Activated CD8-positive, alpha-beta T cell treated with anti-CD3 and anti-CD28 coated beads, Interleukin-2, amount 10 ng/mL, durations not matched to agents 7 days and 5 days (primary cell): ENCODE measurements at regions of chr4 and their contacts with region 1.

Region 1: GRCh38 chr4:120843849-120844527 is 78.5 kb downstream of the PRDM5 start:
- DNase-seq: no peak
- ATAC-seq: no peak
- H3K4me3 Mint-ChIP-seq: no peak overlapping the region
- H3K27ac Mint-ChIP-seq: no peak overlapping the region
- H3K4me1 Mint-ChIP-seq: peaks cover 7% of the 10 kb centered on the region
- H3K27me3 Mint-ChIP-seq: no peaks in the 10 kb centered on the region

Region 2: DNA sequence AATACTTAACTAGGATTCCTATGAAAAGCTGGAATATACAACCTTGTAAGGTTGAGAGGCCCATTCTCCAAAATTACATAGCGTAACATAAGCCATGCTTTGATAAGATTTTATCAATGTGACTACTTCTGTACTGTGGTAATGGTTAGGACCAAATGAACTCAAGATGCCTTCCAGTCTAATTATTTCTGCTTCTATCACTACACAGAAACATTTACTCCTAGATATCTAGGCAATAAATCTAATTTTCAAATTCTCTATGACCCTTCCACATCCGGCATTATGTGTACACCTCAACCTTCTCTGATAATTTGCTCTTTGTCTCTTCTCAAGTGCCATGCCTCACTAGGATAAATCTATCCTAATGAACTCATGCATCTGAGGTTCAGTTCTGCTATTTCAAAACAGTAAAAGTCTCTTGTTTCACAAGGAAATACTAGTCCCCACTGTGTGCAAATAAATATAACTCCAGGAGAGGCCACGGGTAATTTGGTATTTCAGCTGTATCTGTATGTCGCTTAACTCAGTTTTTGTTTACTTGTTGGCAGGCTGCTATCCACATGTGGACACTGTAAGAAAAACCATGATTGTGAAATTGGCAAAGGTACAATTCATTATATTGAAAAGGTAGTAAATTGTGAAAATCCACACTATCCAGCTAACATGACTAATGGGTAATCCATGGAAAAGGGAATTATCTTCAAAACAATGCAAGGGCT is 14.7 kb before region 1 on chr4:
- CTCF ChIA-PET with region 1: interaction called, 17 read pairs
- POLR2A ChIA-PET with region 1: no interaction called
- DNase-seq: no peak
- ATAC-seq: no peak
- H3K4me3 Mint-ChIP-seq: no peak overlapping the region
- H3K27ac Mint-ChIP-seq: no peak overlapping the region
- H3K4me1 Mint-ChIP-seq: no peaks in the 10 kb centered on the region
- H3K27me3 Mint-ChIP-seq: no peaks in the 10 kb centered on the region

Region 3: DNA sequence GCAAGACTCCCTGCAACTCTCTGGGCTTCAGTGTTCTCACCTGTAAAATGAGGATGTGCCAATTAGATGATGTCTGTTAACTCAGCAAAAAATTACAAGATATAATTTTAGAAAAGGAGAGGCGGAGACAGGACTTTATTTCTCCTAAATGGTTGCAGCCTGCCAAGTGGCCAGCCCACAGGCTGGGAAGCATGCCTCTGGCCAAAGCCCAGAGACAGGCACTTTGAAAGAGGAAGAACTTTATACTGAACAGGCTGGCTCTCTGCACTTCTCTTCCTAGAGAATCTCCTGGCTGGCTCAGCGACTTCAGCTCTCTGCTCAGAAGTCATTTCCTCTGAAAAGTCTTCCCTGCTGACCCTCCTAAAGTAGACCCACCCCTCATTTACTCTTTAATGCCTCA is 74.8 kb after region 1 on chr4:
- CTCF ChIA-PET with region 1: interaction called, 11 read pairs
- POLR2A ChIA-PET with region 1: no interaction called
- DNase-seq: no peak
- ATAC-seq: no peak
- H3K4me3 Mint-ChIP-seq: no peak overlapping the region
- H3K27ac Mint-ChIP-seq: no peak overlapping the region
- H3K4me1 Mint-ChIP-seq: peaks cover 14% of the 10 kb centered on the region
- H3K27me3 Mint-ChIP-seq: peaks cover 16% of the 10 kb centered on the region